Mammary epithelial cell (primary cell): ENCODE measurements at regions of chr12 and their contacts with region 1.

Region 1: DNA sequence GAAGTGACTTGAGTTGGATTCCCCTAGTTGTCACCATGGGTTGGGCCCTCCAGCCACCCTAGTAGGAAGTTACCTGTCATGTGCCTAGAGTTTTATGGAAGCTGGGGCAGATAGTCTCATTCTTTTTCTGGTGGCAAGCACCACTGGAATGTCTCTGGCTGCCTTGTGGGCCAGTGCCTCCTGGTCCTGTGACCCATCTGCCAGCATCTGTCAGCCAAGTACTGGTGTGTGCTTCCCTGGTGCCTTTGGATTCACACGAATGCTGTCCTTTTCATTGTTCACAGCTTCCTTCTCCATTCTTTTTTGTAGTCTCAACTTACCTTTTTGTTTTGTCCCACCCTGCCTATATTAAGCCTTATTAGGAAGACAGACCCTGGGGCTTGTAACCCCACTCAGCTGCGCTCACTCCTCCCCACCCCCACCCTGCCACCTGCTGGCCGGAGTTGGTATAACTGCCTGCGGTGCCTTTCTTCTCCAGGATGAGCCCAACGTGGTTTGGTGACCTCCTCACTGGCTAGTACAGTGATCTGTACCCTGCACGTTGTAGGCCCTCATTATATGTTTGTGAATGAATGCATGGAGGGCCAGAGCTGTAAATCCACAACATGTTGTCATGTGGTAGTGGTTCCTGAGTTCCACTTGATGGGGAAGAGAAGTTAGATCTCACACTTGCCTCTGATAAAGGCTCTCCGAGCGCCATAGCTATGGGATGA is 125.7 kb downstream of the TSPAN9 start:
- DNase-seq: peak; percentile 23
- H3K4me3 ChIP-seq: no peak overlapping the region
- H3K27ac ChIP-seq: no peak overlapping the region
- H3K4me1 ChIP-seq: peaks cover 18% of the 10 kb centered on the region
- H3K27me3 ChIP-seq: no peaks in the 10 kb centered on the region
- CTCF ChIP-seq: peak; percentile 95 to 96

Region 2: DNA sequence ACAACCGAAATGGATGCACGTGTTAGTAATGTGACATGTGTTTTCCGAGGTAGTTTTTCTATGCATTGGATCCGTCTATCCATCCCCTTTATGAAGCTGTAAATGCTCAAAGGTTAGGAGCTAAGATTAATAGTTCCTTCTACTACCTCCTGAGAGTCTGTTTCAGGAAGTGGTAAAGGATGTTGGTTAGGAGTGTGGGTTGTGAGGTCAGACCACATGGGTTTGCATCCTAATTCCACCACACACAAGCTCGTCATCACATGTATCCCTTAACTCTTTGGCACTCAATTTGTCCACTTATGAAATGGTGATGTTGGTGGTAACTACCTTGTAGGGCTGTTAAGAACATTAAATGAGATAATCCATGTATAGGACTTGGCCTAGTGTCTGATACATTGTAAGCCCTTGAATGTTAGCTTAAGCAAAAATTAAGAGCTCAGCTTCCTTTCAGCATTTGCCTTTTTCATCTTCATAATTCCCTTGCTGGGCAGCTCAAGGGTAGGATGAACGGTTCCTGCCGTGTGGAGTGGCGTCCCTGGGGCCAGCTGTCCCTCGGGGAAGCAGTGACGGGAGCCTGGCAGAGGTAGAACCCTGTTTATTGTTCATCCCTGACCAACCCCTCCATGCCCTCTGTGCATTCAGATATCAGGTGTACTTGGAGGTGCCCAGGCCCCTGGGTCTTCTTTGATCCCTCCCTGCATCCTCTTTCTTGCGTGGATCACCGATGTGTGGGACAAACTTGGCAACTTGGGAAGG is 73.4 kb before region 1 on chr12:
- CTCF ChIA-PET with region 1: no interaction called
- dilution Hi-C with region 1: no loop called
- in situ Hi-C with region 1: loop called in 1 of 2 experiments (anchors 5 kb)
- intact Hi-C with region 1: no loop called
- DNase-seq: peak; percentile 78
- H3K4me3 ChIP-seq: no peak overlapping the region
- H3K27ac ChIP-seq: no peak overlapping the region
- H3K4me1 ChIP-seq: peaks cover 21% of the 10 kb centered on the region
- H3K27me3 ChIP-seq: no peaks in the 10 kb centered on the region
- CTCF ChIP-seq: no peak

Region 3: DNA sequence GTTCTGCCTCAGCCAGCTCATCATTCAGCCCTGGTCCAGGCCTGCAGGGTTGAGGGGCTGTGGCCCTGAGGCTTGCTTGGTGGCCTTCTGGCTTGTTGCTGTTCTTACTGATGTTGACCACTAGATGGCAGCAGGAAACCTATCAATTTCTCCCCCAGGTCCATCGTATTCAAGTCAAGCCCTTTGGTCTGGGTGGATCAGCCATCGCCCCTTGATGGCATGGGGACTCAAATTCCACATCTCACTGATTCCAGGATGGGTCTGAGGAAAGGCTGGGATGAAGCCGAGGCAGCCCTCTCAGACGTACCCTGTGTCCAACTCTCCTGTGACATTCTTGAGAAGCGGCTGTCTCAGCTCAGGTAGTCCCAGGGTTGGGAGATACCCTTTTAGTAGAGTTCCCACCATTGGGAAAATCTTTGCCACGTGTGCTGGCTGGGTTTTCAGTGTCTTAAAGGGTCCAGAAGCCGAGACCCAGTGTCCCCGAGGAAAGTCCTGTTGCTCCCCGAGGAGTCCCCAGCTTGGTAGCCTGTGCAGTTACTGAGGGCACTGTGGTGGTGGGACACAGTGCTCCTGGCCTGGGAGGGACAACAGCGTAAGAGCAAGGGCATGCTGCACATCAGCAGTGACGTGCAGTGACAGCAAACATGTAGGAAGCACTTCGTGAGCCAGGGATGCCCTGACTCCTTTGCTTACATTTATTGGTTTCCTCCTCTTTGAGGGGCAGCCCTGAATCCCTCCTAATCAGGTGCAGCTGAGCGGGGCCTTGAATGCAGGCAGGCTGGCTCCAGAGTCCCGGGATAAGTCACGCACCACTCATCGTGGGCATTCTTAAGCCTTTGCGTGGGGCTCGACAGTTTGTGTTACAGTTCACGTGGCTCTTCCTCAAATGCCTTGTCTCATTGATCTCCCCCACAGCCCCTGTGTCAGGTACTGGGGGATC is 67.1 kb before region 1 on chr12:
- CTCF ChIA-PET with region 1: no interaction called
- dilution Hi-C with region 1: no loop called
- in situ Hi-C with region 1: loop called in 1 of 2 experiments (anchors 5 kb)
- intact Hi-C with region 1: loop called (anchors 1 kb)
- DNase-seq: peak; percentile 51
- H3K4me3 ChIP-seq: no peak overlapping the region
- H3K27ac ChIP-seq: no peak overlapping the region
- H3K4me1 ChIP-seq: peaks cover 2% of the 10 kb centered on the region
- H3K27me3 ChIP-seq: no peaks in the 10 kb centered on the region
- CTCF ChIP-seq: peak; percentile 66 to 79

Region 4: DNA sequence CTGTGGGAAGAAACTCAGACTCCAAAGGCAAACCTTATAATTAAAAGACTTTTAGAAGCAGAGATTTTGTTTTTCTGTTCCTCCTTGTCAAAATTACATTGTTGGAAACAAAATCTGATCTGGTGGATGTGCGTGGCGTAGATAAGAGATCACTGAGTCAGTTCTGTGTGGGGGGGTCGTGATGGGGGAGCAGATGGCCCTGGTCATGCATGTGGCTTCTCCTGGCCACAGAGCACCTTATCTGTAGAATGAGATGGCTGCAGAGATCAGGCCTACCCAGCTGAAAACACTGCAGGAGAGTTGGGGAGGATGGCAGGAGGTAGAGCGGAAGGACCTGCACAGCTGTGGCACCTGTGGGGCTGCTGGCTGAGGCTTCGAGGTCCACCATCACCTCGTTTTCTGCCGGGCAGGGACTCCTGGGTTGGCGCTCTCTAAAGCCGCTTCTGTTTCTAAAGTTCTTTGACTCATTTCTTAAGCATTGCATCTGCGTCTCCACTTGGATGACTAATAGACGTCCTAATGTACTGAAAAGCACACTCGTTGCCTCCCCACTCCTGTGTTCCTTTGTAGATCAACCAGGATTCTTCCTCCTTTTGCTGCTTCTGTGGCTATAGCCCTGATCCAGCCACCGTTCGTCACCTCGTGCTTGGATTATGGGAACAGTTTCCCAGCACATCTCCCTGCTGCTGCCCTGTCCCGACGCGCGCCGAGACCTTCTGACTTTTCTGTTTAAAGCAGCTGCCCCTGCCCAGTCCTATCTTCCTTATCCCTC is 32.3 kb before region 1 on chr12:
- CTCF ChIA-PET with region 1: no interaction called
- dilution Hi-C with region 1: no loop called
- in situ Hi-C with region 1: no loop called
- intact Hi-C with region 1: loop called (anchors 2 kb)
- DNase-seq: peak; percentile 80
- H3K4me3 ChIP-seq: no peak overlapping the region
- H3K27ac ChIP-seq: peak overlapping the region; percentile 61
- H3K4me1 ChIP-seq: peaks cover 44% of the 10 kb centered on the region
- H3K27me3 ChIP-seq: no peaks in the 10 kb centered on the region
- CTCF ChIP-seq: no peak